ENCODE measurements at regions of chr22 and their contacts with region 1.

Region 1: GRCh38 chr22:38733329-38733723 is 22.5 kb downstream of the SUN2 start:
- DNase-seq: peak; percentile 79

Region 2: DNA sequence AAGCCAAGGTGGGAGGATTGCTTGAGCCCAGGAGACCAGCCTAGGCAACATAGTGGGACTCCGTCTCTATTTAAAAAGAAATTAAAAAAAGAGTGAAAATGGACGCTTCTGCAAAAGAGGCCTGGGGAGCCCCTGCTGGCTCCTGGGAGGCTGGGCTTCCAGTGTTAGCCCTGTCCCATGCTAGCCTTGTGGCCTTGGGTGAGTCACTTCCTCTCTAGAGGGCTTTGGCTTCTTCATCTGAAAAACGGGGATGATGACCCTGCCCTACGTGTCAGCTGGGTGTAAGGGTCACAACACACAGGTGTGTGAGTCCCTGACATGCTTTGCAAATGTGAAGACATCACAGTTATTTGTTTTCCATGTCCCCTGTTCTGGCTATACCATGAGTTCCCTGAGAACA is 110.0 kb before region 1 on chr22:
- CTCF ChIA-PET with region 1: no interaction called
- POLR2A ChIA-PET with region 1: no interaction called
- DNase-seq: no peak

Region 3: GRCh38 chr22:38721536-38721935 is 11.8 kb before region 1 on chr22:
- CTCF ChIA-PET with region 1: interaction called, 12 read pairs
- POLR2A ChIA-PET with region 1: interaction called, 4 read pairs
- DNase-seq: no peak